ENCODE measurements at regions of chr12 and their contacts with region 1.

Region 1: GRCh38 chr12:48618541-48618940 is 48.7 kb upstream of the LALBA start:
- DNase-seq: peak; percentile 84
- H3K4me3 Mint-ChIP-seq: no peak overlapping the region
- H3K27ac Mint-ChIP-seq: no peak overlapping the region
- H3K4me1 Mint-ChIP-seq: no peaks in the 10 kb centered on the region
- H3K27me3 Mint-ChIP-seq: peaks cover 23% of the 10 kb centered on the region

Region 2: DNA sequence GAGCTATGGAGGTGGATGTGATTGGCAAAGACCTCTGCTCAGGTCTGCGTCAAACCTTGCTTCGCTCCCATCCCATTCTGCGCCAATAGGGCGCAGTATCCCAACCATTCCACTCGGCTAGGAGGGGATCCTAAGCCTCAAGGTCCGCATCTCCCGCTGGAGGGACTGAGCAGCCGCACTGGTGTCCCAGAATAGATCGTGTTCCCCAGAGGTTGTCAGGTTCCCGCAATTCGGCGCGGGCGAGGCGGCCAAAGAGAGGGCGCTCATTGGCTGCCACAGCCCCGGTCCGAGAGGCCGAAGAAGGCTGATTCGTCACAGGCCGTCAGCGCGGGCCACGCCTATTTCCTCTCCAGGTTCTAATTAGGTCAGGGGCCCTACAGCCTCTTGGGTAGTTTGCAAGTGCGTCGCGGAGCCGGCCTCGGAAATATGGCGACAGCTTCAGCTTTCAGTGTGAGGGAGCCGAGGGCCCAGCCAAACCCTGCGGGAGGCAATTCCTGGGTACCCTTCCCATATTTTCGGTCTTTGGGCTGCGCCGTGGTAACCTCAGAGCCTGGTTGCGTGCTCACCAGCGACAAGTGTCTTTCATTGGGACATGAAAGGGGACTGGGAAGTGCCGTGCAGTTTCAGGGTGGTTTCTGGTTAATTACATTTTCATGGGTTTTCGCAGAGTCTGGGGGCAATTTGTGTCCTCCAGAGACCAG is 420.4 kb before region 1 on chr12:
- CTCF ChIA-PET with region 1: interaction called, 16 read pairs
- DNase-seq: peak; percentile 95
- H3K4me3 Mint-ChIP-seq: peak overlapping the region; percentile 73
- H3K27ac Mint-ChIP-seq: peak overlapping the region; percentile 87
- H3K4me1 Mint-ChIP-seq: peaks cover 51% of the 10 kb centered on the region
- H3K27me3 Mint-ChIP-seq: peaks cover 21% of the 10 kb centered on the region

Region 3: GRCh38 chr12:48542300-48542928 is 76.1 kb before region 1 on chr12:
- CTCF ChIA-PET with region 1: interaction called, 125 read pairs
- DNase-seq: peak; percentile 71
- H3K4me3 Mint-ChIP-seq: no peak overlapping the region
- H3K27ac Mint-ChIP-seq: no peak overlapping the region
- H3K4me1 Mint-ChIP-seq: no peaks in the 10 kb centered on the region
- H3K27me3 Mint-ChIP-seq: peaks cover 3% of the 10 kb centered on the region

Region 4: GRCh38 chr12:48696626-48697025 is 78.1 kb after region 1 on chr12:
- CTCF ChIA-PET with region 1: no interaction called
- DNase-seq: no peak
- H3K4me3 Mint-ChIP-seq: no peak overlapping the region
- H3K27ac Mint-ChIP-seq: no peak overlapping the region
- H3K4me1 Mint-ChIP-seq: no peaks in the 10 kb centered on the region
- H3K27me3 Mint-ChIP-seq: no peaks in the 10 kb centered on the region

Measured in activated naive CD4-positive, alpha-beta T cell treated with anti-CD3 and anti-CD28 coated beads, Interleukin-2, amount 10 ng/mL, durations not matched to agents 7 days and 5 days (primary cell).